ENCODE measurements at regions of chr3 and their contacts with region 1.

Region 1: DNA sequence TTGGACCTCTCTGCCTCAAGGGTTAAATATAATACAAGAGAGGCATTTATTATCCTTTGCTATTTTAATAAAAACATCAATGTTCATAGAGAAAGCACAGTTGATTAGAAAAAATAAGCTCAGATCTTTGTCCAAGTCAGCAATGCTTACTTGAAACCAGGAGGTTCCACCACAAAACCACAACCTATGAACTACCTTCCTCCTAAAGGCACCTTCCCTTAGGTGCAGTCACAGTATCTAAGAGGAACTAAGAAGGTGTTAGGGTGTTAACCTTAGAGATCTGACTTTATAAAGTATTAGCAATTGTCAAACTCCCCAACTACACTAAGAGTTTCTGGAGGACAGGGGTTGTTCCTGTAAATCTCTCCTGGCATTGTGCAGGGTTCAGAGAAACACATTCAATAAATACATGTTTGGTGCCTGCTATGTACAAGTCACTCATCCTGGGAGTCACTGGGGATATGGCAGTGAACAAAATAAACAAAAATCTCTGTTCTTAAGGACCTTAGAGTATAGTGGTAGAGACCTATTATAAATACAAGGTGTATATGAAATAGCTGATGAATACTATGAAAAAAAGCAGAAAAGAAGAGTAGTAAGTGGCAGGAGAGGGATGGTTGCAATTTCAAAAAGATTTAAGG is 208.6 kb downstream of the NFKBIZ start:
- DNase-seq: peak; percentile 85
- ATAC-seq: peak; percentile 79
- H3K4me3 ChIP-seq: no peak overlapping the region
- H3K27ac ChIP-seq: peak overlapping the region; percentile 65
- H3K4me1 ChIP-seq: peaks cover 37% of the 10 kb centered on the region
- H3K27me3 ChIP-seq: no peaks in the 10 kb centered on the region
- CTCF ChIP-seq: no peak
- EP300 ChIP-seq: peak; percentile 76 to 79; a peak in 3 of 4 replicates
- POLR2A ChIP-seq: no peak
- RAD21 ChIP-seq: no peak

Region 2: GRCh38 chr3:101656651-101657050 is 401.2 kb before region 1 on chr3:
- CTCF ChIA-PET with region 1: no interaction called
- POLR2A ChIA-PET with region 1: no interaction called
- RAD21 ChIA-PET with region 1: no interaction called
- SMC1A ChIA-PET with region 1: no interaction called
- in situ Hi-C with region 1: no loop called
- intact Hi-C with region 1: no loop called
- DNase-seq: no peak
- ATAC-seq: no peak
- H3K4me3 ChIP-seq: no peak overlapping the region
- H3K27ac ChIP-seq: no peak overlapping the region
- H3K4me1 ChIP-seq: no peaks in the 10 kb centered on the region
- H3K27me3 ChIP-seq: no peaks in the 10 kb centered on the region
- CTCF ChIP-seq: no peak
- EP300 ChIP-seq: no peak
- POLR2A ChIP-seq: no peak
- RAD21 ChIP-seq: no peak

Region 3: GRCh38 chr3:101809178-101810021 is 248.5 kb before region 1 on chr3:
- CTCF ChIA-PET with region 1: interaction called, 8 read pairs
- POLR2A ChIA-PET with region 1: no interaction called
- RAD21 ChIA-PET with region 1: interaction called, 9 read pairs
- SMC1A ChIA-PET with region 1: interaction called, 16 read pairs
- in situ Hi-C with region 1: no loop called
- intact Hi-C with region 1: no loop called
- DNase-seq: no peak
- ATAC-seq: peak; percentile 64
- H3K4me3 ChIP-seq: no peak overlapping the region
- H3K27ac ChIP-seq: no peak overlapping the region
- H3K4me1 ChIP-seq: peaks cover 15% of the 10 kb centered on the region
- H3K27me3 ChIP-seq: no peaks in the 10 kb centered on the region
- CTCF ChIP-seq: peak; percentile 56 to 84 (median 65); a peak in 5 of 6 replicates
- EP300 ChIP-seq: no peak
- POLR2A ChIP-seq: no peak
- RAD21 ChIP-seq: peak; percentile 82

Region 4: DNA sequence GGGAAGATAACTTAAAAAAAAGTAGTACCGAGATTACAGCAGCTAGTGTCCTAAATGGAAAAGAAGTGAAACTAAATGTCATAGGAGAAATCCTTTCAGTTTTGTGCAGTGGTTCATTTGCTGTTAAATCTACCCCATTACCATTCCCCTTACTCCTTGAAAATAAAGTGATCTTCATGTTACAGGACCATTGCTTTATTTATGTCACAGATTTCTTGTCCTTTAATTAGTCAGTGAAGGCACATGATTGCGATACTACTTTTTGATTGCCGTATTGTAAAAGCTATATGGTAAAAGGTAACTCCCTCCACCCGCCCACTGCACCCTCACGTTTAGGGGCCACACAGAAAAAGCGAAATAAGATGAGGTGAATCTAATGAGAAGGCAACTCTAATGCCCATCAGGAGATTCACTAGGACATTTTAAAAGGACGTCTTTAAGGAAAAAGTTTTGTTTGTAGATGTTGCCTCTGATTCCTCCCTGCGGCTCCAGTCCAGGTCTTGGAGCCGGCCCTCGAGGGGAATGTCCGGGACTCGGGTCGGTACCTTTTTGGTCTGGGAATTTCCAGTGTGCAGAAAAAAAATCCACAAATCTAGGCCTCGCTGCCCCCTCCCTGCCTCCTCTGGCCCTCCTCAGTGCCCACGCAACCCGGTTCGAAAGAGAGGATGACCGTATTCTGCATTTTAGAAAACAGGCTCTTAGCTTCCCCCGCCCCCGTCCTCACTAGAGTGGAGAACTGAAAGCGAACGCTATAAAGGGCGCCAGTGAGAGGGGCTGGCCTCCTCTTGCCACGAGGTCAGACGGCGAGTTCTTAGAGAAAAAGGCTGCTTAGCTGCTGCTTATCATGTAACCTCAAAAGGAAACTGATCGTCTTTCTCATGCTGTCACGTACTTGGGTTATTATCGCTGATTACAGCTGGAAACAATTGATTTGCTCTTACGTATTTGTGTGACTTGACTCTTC is 230.4 kb before region 1 on chr3:
- CTCF ChIA-PET with region 1: interaction called, 3 read pairs
- POLR2A ChIA-PET with region 1: interaction called, 7 read pairs
- RAD21 ChIA-PET with region 1: interaction called, 17 read pairs
- SMC1A ChIA-PET with region 1: interaction called, 20 read pairs
- in situ Hi-C with region 1: no loop called
- intact Hi-C with region 1: loop called (anchors 5 kb)
- DNase-seq: peak; percentile 93
- ATAC-seq: peak; percentile 83
- H3K4me3 ChIP-seq: peak overlapping the region; percentile 78
- H3K27ac ChIP-seq: peak overlapping the region; percentile 92
- H3K4me1 ChIP-seq: peaks cover 11% of the 10 kb centered on the region
- H3K27me3 ChIP-seq: no peaks in the 10 kb centered on the region
- CTCF ChIP-seq: no peak
- EP300 ChIP-seq: peak; percentile 36 to 84
- POLR2A ChIP-seq: peak; percentile 92
- RAD21 ChIP-seq: peak; percentile 38; the same call in 1 of the 2 replicates

Region 5: GRCh38 chr3:101849051-101849720 is 208.7 kb before region 1 on chr3 and contains the start of gene NFKBIZ:
- CTCF ChIA-PET with region 1: interaction called, 3 read pairs
- POLR2A ChIA-PET with region 1: interaction called, 7 read pairs
- RAD21 ChIA-PET with region 1: interaction called, 22 read pairs
- SMC1A ChIA-PET with region 1: interaction called, 4 read pairs
- in situ Hi-C with region 1: no loop called
- intact Hi-C with region 1: loop called (anchors 5 kb)
- DNase-seq: no peak
- ATAC-seq: peak; percentile 78
- H3K4me3 ChIP-seq: peak within 1 kb of the TSS; percentile 75
- H3K27ac ChIP-seq: peak within 1 kb of the TSS; percentile 93
- H3K4me1 ChIP-seq: peaks cover 16% of the 10 kb centered on the region
- H3K27me3 ChIP-seq: no peaks in the 10 kb centered on the region
- CTCF ChIP-seq: no peak
- EP300 ChIP-seq: no peak
- POLR2A ChIP-seq: peak; percentile 95
- RAD21 ChIP-seq: no peak
- polyA plus RNA-seq, gene NFKBIZ: 6.3 to 8.9 TPM

Region 6: GRCh38 chr3:101902041-101902440 is 155.9 kb before region 1 on chr3:
- CTCF ChIA-PET with region 1: interaction called, 5 read pairs
- POLR2A ChIA-PET with region 1: interaction called, 5 read pairs
- RAD21 ChIA-PET with region 1: interaction called, 8 read pairs
- SMC1A ChIA-PET with region 1: interaction called, 24 read pairs
- in situ Hi-C with region 1: no loop called
- intact Hi-C with region 1: no loop called
- DNase-seq: no peak
- ATAC-seq: peak; percentile 42
- H3K4me3 ChIP-seq: no peak overlapping the region
- H3K27ac ChIP-seq: no peak overlapping the region
- H3K4me1 ChIP-seq: peaks cover 26% of the 10 kb centered on the region
- H3K27me3 ChIP-seq: no peaks in the 10 kb centered on the region
- CTCF ChIP-seq: no peak
- EP300 ChIP-seq: no peak
- POLR2A ChIP-seq: no peak
- RAD21 ChIP-seq: no peak

Region 7: DNA sequence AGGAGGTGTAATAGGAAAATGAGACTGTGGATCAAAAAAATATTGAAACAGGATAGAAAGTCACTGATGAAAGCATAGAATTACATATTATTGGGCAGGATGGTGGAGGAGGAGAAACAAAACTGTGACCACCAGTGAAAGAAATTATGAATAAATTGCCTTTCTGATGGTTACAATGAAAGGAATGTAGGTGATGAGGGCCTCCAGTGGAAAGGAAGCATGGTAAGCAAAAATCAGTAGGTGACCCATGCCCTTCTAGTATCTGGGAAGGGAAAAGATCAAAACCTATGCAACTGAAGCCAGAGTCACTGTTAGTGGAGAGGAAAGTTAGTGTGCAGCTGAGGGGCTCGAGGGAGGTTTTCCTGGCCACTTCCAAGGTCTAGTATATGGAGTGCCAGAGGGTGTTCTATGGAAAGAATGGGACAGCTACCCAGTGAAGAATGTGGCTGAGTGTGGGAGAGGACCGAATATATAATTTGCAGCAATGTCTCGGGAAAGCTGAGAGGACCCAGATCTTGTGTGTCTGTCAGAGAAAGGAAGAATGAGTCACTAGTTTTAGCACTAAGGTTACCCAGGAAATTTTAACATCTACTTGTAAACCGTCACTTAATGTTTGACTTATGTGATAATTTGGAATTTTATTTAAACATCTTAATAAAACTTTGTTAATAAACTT is 62.4 kb before region 1 on chr3:
- CTCF ChIA-PET with region 1: interaction called, 3 read pairs
- POLR2A ChIA-PET with region 1: interaction called, 5 read pairs
- RAD21 ChIA-PET with region 1: interaction called, 20 read pairs
- SMC1A ChIA-PET with region 1: interaction called, 20 read pairs
- in situ Hi-C with region 1: no loop called
- intact Hi-C with region 1: no loop called
- DNase-seq: no peak
- ATAC-seq: peak; percentile 26; the same call in 1 of the 3 replicates
- H3K4me3 ChIP-seq: no peak overlapping the region
- H3K27ac ChIP-seq: peak overlapping the region; percentile 22; the same call in 1 of the 2 replicates
- H3K4me1 ChIP-seq: peaks cover 29% of the 10 kb centered on the region
- H3K27me3 ChIP-seq: no peaks in the 10 kb centered on the region
- CTCF ChIP-seq: no peak
- EP300 ChIP-seq: no peak
- POLR2A ChIP-seq: no peak
- RAD21 ChIP-seq: no peak

Region 8: GRCh38 chr3:102682741-102683140 is 624.8 kb after region 1 on chr3:
- CTCF ChIA-PET with region 1: no interaction called
- POLR2A ChIA-PET with region 1: no interaction called
- RAD21 ChIA-PET with region 1: no interaction called
- SMC1A ChIA-PET with region 1: no interaction called
- in situ Hi-C with region 1: no loop called
- intact Hi-C with region 1: no loop called
- DNase-seq: no peak
- ATAC-seq: no peak
- H3K4me3 ChIP-seq: no peak overlapping the region
- H3K27ac ChIP-seq: no peak overlapping the region
- H3K4me1 ChIP-seq: no peaks in the 10 kb centered on the region
- H3K27me3 ChIP-seq: no peaks in the 10 kb centered on the region; a peak in 1 of 4 replicates
- CTCF ChIP-seq: no peak
- EP300 ChIP-seq: no peak
- POLR2A ChIP-seq: no peak
- RAD21 ChIP-seq: no peak

Measured in GM12878 (cell line).